ENCODE measurements at regions of chr11 and their contacts with region 1.

Region 1: GRCh38 chr11:118198370-118198769 is 21.9 kb upstream of the SCN2B start:
- DNase-seq: peak; percentile 53
- H3K4me3 Mint-ChIP-seq: no peak overlapping the region
- H3K27ac Mint-ChIP-seq: no peak overlapping the region
- H3K4me1 Mint-ChIP-seq: peaks cover 9% of the 10 kb centered on the region
- H3K27me3 Mint-ChIP-seq: no peaks in the 10 kb centered on the region
- CTCF ChIP-seq: peak; percentile 88

Region 2: DNA sequence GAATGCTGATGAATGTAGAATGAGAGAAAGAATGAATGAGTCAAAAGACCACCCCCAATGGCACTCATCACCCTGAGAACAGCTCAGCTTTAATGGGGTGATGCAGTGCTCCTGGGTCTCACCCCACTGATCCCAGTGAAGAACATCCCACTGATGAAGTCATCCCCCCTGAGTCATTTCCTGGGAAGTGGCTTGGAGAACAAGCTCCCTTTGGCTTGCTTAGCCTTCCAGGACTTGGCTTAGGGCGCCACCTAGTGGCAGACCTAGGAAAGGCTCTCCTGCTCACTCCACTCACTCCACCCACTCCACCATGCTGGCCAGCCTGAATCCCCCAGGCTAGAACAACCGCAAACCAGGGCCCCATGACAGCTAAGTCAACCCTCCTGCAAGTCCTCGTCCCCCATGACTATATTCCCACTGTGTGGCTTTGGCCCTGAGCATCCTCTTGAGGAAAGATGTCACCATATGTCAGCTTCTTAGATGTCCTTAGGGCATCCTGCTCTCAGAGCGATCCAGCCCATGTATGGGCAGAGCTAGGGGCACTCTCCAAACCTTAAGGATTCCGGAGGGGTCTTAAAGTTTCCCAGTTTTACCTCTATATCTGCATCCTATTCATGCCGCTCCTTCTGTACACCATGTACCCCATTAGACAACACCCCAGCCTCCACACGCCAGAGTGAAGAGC is 251.4 kb before region 1 on chr11:
- CTCF ChIA-PET with region 1: no interaction called
- POLR2A ChIA-PET with region 1: no interaction called
- intact Hi-C with region 1: no loop called
- DNase-seq: peak; percentile 94
- H3K4me3 Mint-ChIP-seq: no peak overlapping the region
- H3K27ac Mint-ChIP-seq: no peak overlapping the region
- H3K4me1 Mint-ChIP-seq: peaks cover 3% of the 10 kb centered on the region
- H3K27me3 Mint-ChIP-seq: peaks cover 29% of the 10 kb centered on the region
- CTCF ChIP-seq: peak; percentile 91

Region 3: GRCh38 chr11:117979481-117980211 is 218.7 kb before region 1 on chr11:
- CTCF ChIA-PET with region 1: no interaction called
- POLR2A ChIA-PET with region 1: no interaction called
- intact Hi-C with region 1: no loop called
- DNase-seq: no peak
- H3K4me3 Mint-ChIP-seq: no peak overlapping the region
- H3K27ac Mint-ChIP-seq: no peak overlapping the region
- H3K4me1 Mint-ChIP-seq: peaks cover 3% of the 10 kb centered on the region
- H3K27me3 Mint-ChIP-seq: peaks cover 34% of the 10 kb centered on the region
- CTCF ChIP-seq: no peak

Region 4: GRCh38 chr11:118214210-118214914 is 16.0 kb after region 1 on chr11:
- CTCF ChIA-PET with region 1: interaction called, 18 read pairs
- POLR2A ChIA-PET with region 1: interaction called, 3 read pairs
- intact Hi-C with region 1: no loop called
- DNase-seq: no peak
- H3K4me3 Mint-ChIP-seq: no peak overlapping the region
- H3K27ac Mint-ChIP-seq: no peak overlapping the region
- H3K4me1 Mint-ChIP-seq: no peaks in the 10 kb centered on the region
- H3K27me3 Mint-ChIP-seq: peaks cover 51% of the 10 kb centered on the region
- CTCF ChIP-seq: no peak

Region 5: GRCh38 chr11:118232659-118233058 is 34.3 kb after region 1 on chr11:
- CTCF ChIA-PET with region 1: no interaction called
- POLR2A ChIA-PET with region 1: no interaction called
- intact Hi-C with region 1: no loop called
- DNase-seq: no peak
- H3K4me3 Mint-ChIP-seq: no peak overlapping the region
- H3K27ac Mint-ChIP-seq: no peak overlapping the region
- H3K4me1 Mint-ChIP-seq: no peaks in the 10 kb centered on the region
- H3K27me3 Mint-ChIP-seq: no peaks in the 10 kb centered on the region
- CTCF ChIP-seq: no peak

Region 6: DNA sequence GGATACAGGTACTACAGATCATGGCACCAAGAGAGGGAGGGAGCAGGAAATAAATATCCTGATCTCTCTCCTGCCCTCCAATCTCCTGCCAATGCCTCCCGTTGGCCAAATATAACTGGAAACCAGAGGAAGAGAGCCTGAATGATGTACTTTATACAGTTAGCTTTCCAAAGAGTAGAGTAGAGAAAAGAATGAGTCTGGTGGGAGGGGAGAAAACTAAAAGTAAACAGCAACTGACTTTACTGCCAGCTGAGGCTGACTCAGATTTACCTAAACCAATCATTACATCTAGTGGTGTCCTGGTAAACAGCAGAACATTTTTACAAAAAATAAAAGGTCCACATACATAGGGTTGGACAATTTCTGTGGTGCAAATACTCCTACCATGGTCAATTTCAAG is 48.7 kb after region 1 on chr11:
- CTCF ChIA-PET with region 1: interaction called, 18 read pairs
- POLR2A ChIA-PET with region 1: interaction called, 5 read pairs
- intact Hi-C with region 1: no loop called
- DNase-seq: no peak
- H3K4me3 Mint-ChIP-seq: no peak overlapping the region
- H3K27ac Mint-ChIP-seq: no peak overlapping the region
- H3K4me1 Mint-ChIP-seq: peaks cover 21% of the 10 kb centered on the region
- H3K27me3 Mint-ChIP-seq: no peaks in the 10 kb centered on the region
- CTCF ChIP-seq: no peak

Region 7: GRCh38 chr11:118283756-118284350 is 85.5 kb after region 1 on chr11:
- CTCF ChIA-PET with region 1: interaction called, 58 read pairs
- POLR2A ChIA-PET with region 1: no interaction called
- intact Hi-C with region 1: no loop called
- DNase-seq: no peak
- H3K4me3 Mint-ChIP-seq: no peak overlapping the region
- H3K27ac Mint-ChIP-seq: no peak overlapping the region
- H3K4me1 Mint-ChIP-seq: peaks cover 5% of the 10 kb centered on the region
- H3K27me3 Mint-ChIP-seq: no peaks in the 10 kb centered on the region
- CTCF ChIP-seq: no peak

Region 8: GRCh38 chr11:118353084-118353710 is 154.8 kb after region 1 on chr11:
- CTCF ChIA-PET with region 1: interaction called, 17 read pairs
- POLR2A ChIA-PET with region 1: interaction called, 3 read pairs
- intact Hi-C with region 1: loop called (anchors 1 kb)
- DNase-seq: peak; percentile 43
- H3K4me3 Mint-ChIP-seq: no peak overlapping the region
- H3K27ac Mint-ChIP-seq: no peak overlapping the region
- H3K4me1 Mint-ChIP-seq: no peaks in the 10 kb centered on the region
- H3K27me3 Mint-ChIP-seq: peaks cover 32% of the 10 kb centered on the region
- CTCF ChIP-seq: peak; percentile 51

Measured in MCF 10A (cell line).